Mammary epithelial cell (primary cell): ENCODE measurements at regions of chr18 and their contacts with region 1.

Region 1: GRCh38 chr18:8254654-8255053 is 354.6 kb upstream of the RAB12 start:
- DNase-seq: no peak
- H3K4me3 ChIP-seq: no peak overlapping the region
- H3K27ac ChIP-seq: no peak overlapping the region
- H3K4me1 ChIP-seq: no peaks in the 10 kb centered on the region
- H3K27me3 ChIP-seq: no peaks in the 10 kb centered on the region
- CTCF ChIP-seq: no peak

Region 2: DNA sequence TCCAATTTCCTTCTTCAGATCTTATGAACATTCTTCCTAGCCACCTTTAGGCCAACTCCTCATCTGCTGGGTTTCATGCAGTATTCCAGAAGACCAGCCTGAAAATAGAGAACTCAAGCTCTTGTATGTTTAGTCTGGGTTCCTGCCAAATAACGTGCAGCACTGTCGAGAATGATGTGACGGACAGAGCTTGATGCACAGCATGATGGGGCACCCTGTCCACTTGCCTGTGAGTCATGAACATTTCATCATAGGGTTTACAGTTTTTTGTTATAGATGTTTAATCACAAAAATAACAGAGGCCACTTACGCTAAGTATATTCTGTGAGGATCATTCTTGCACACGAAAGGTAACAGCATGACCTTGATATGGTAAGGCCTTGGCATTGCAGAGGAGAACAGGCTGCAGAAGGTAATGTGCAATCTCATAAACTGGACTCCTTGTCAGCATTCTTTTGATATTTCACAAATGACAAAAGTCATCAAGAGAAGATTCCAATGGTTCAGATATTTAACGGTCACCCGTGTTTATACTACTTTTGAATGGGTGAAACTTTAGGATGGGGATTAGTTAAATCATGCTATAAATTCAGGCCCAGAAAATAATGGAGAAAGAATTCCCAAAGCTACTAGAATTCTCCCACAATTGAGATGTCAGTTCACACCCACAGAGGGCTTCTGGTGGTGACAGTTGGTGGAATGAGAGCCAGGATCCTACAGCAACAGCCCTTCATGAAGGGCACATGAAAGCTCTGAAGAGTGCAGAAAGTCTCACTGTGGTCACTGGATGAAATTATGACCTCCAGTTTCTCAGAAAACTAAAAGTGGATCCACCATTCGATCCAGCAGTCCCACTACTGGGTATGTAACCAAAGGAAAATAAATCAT is 41.5 kb before region 1 on chr18:
- CTCF ChIA-PET with region 1: no interaction called
- dilution Hi-C with region 1: loop called (anchors 5 kb)
- in situ Hi-C with region 1: no loop called
- intact Hi-C with region 1: no loop called
- DNase-seq: peak; percentile 5
- H3K4me3 ChIP-seq: no peak overlapping the region
- H3K27ac ChIP-seq: no peak overlapping the region
- H3K4me1 ChIP-seq: no peaks in the 10 kb centered on the region
- H3K27me3 ChIP-seq: no peaks in the 10 kb centered on the region
- CTCF ChIP-seq: no peak